ENCODE measurements at regions of chr12 and their contacts with region 1.

Region 1: GRCh38 chr12:29552324-29552927 is 54.9 kb upstream of the OVCH1 start:
- DNase-seq: peak; percentile 79
- H3K4me3 Mint-ChIP-seq: no peak overlapping the region
- H3K27ac Mint-ChIP-seq: no peak overlapping the region
- H3K4me1 Mint-ChIP-seq: no peaks in the 10 kb centered on the region
- H3K27me3 Mint-ChIP-seq: peaks cover 9% of the 10 kb centered on the region
- CTCF ChIP-seq: peak; percentile 76

Region 2: GRCh38 chr12:29066011-29066588 is 486.3 kb before region 1 on chr12:
- CTCF ChIA-PET with region 1: no interaction called
- intact Hi-C with region 1: no loop called
- DNase-seq: no peak
- H3K4me3 Mint-ChIP-seq: no peak overlapping the region
- H3K27ac Mint-ChIP-seq: no peak overlapping the region
- H3K4me1 Mint-ChIP-seq: peaks cover 12% of the 10 kb centered on the region
- H3K27me3 Mint-ChIP-seq: peaks cover 12% of the 10 kb centered on the region
- CTCF ChIP-seq: no peak

Region 3: GRCh38 chr12:30134229-30134628 is 581.8 kb after region 1 on chr12:
- CTCF ChIA-PET with region 1: interaction called, 3 read pairs
- intact Hi-C with region 1: loop called (anchors 1 kb)
- DNase-seq: no peak
- H3K4me3 Mint-ChIP-seq: no peak overlapping the region
- H3K27ac Mint-ChIP-seq: no peak overlapping the region
- H3K4me1 Mint-ChIP-seq: no peaks in the 10 kb centered on the region
- H3K27me3 Mint-ChIP-seq: no peaks in the 10 kb centered on the region
- CTCF ChIP-seq: peak; percentile 22

Region 4: GRCh38 chr12:30806989-30807694 is 1254.7 kb after region 1 on chr12:
- CTCF ChIA-PET with region 1: no interaction called
- intact Hi-C with region 1: loop called (anchors 10 kb)
- DNase-seq: peak; percentile 42
- H3K4me3 Mint-ChIP-seq: no peak overlapping the region
- H3K27ac Mint-ChIP-seq: peak overlapping the region; percentile 43
- H3K4me1 Mint-ChIP-seq: peaks cover 11% of the 10 kb centered on the region
- H3K27me3 Mint-ChIP-seq: no peaks in the 10 kb centered on the region
- CTCF ChIP-seq: peak; percentile 43

Measured in Calu3 (cell line).